HepG2 (cell line): ENCODE measurements at regions of chr20 and their contacts with region 1.

Region 1: DNA sequence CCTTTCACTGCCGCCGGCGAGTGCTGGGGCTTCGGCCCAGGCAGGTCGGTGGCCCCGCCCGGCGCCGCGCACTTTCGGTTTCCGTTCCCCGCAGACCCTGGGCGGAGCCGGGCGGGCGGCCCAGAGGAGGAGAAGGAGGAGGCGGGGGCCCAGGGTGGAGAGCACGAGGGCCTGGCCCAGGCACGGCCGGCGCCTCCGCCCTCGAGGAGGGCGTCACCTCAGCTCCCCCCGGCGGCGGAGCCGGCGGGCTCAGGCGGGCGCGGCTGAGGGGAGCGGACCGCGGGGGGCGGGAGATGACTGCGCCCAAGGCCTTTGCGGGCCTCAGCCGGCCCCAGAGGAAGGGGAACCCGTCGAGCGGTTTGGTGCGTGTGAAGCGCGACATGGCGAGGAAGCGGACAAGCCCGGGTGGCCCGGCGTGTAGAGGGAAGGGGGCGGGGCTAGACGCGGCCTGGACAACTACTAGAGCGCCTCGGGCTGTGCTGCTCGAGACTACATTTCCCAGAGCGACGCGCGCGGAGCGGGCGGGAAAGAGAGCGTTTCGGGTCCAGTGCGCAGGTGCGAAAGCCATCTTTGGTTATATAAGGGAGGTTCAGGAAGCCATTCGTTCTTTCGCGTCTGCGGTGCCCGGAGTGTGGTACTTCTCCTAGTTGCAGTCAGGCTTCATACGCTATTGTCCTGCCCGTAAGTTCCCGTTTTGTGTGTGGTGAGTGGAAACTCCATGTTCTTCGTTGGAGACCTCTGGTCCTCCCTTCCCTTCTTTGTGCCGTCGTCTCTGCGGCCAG is at the start of gene ZNFX1:
- DNase-seq: peak; percentile 99
- ATAC-seq: peak; percentile 89
- H3K4me3 ChIP-seq: peak within 1 kb of the TSS; percentile 91 to 98 (median 93)
- H3K27ac ChIP-seq: peak within 1 kb of the TSS; percentile 91
- H3K4me1 ChIP-seq: peaks cover 60% of the 10 kb centered on the region
- H3K27me3 ChIP-seq: peaks cover 0 to 4% of the 10 kb centered on the region in 2 experiments; a peak in 1 of 5 replicates
- CTCF ChIP-seq: peak; percentile 46; the same call in 1 of the 2 replicates
- EP300 ChIP-seq: peak; percentile 33 to 38; a peak in 2 of 4 replicates
- POLR2A ChIP-seq: peak; percentile 100
- RAD21 ChIP-seq: peak; percentile 75
- total RNA-seq, gene ZNFX1: 11.1 and 15.9 TPM in 2 replicates

Region 2: GRCh38 chr20:48818407-48818987 is 459.7 kb before region 1 on chr20:
- CTCF ChIA-PET with region 1: no interaction called
- POLR2A ChIA-PET with region 1: no interaction called
- in situ Hi-C with region 1: no loop called
- intact Hi-C with region 1: loop called (anchors 5 kb)
- DNase-seq: no peak
- ATAC-seq: no peak
- H3K4me3 ChIP-seq: no peak overlapping the region
- H3K27ac ChIP-seq: no peak overlapping the region
- H3K4me1 ChIP-seq: no peaks in the 10 kb centered on the region
- H3K27me3 ChIP-seq: peaks cover 3 to 92% of the 10 kb centered on the region in 2 experiments; a peak in 4 of 5 replicates
- CTCF ChIP-seq: no peak
- EP300 ChIP-seq: no peak
- POLR2A ChIP-seq: no peak
- RAD21 ChIP-seq: no peak

Region 3: DNA sequence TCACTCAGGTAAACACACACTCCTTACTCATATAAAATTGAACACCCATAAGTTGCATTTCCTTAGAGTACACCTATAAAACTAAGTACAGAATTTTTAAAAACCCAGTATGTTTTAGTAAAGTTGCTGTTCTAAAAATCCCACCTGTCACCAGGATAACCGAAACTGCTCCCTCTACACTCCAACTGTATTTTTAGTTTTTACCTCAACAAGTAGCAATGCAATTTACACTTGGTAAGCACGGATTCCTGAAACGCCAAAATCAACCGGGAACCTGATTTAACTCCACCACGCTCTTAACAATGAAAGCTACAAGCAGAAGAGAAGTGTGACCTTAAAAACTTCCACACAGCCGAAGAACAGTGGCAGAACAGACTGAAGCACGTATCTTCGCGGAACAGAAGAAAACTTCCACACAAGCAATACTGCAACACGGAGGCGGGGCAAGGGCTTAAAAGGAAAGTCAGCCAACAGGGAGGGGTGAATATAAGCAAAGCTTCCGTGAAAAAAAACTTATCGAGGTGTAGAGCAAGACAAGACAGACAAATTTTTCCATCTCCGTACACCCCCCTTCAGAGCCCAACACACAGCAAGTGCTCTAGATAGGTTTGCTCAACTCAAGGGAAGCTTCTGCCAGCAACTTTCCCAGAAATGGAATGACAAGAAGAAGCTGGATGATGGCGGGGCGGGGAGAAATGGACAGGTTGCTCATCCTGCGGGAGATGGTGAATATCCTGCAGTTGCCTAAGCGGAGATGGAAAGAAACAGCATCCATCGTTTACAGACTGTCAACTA is 91.5 kb before region 1 on chr20:
- CTCF ChIA-PET with region 1: no interaction called
- POLR2A ChIA-PET with region 1: interaction called, 4 read pairs
- in situ Hi-C with region 1: no loop called
- intact Hi-C with region 1: loop called (anchors 5 kb)
- DNase-seq: peak; percentile 62
- ATAC-seq: peak; percentile 2; the same call in 1 of the 3 replicates
- H3K4me3 ChIP-seq: peak overlapping the region; percentile 88 to 99 (median 97)
- H3K27ac ChIP-seq: peak overlapping the region; percentile 77
- H3K4me1 ChIP-seq: peaks cover 42% of the 10 kb centered on the region
- H3K27me3 ChIP-seq: peaks cover 0 to 5% of the 10 kb centered on the region in 2 experiments; a peak in 1 of 5 replicates
- CTCF ChIP-seq: peak; percentile 9; the same call in 1 of the 2 replicates
- EP300 ChIP-seq: peak in 1 of 2 experiments; percentile 18; a peak in 1 of 4 replicates
- POLR2A ChIP-seq: peak; percentile 51 to 60; a peak in 3 of 4 replicates
- RAD21 ChIP-seq: no peak

Region 4: GRCh38 chr20:49207076-49207475 is 71.2 kb before region 1 on chr20:
- CTCF ChIA-PET with region 1: no interaction called
- POLR2A ChIA-PET with region 1: no interaction called
- in situ Hi-C with region 1: no loop called
- intact Hi-C with region 1: no loop called
- DNase-seq: peak; percentile 76
- ATAC-seq: peak; percentile 98
- H3K4me3 ChIP-seq: no peak overlapping the region; a peak in 1 of 6 replicates
- H3K27ac ChIP-seq: no peak overlapping the region
- H3K4me1 ChIP-seq: 0 out of 2 replicates have a peak, but pooled peaks cover 12% of the 10 kb centered on the region
- H3K27me3 ChIP-seq: no peaks in the 10 kb centered on the region
- CTCF ChIP-seq: peak; percentile 94
- EP300 ChIP-seq: no peak
- POLR2A ChIP-seq: no peak
- RAD21 ChIP-seq: peak; percentile 65; the same call in 1 of the 2 replicates

Region 5: DNA sequence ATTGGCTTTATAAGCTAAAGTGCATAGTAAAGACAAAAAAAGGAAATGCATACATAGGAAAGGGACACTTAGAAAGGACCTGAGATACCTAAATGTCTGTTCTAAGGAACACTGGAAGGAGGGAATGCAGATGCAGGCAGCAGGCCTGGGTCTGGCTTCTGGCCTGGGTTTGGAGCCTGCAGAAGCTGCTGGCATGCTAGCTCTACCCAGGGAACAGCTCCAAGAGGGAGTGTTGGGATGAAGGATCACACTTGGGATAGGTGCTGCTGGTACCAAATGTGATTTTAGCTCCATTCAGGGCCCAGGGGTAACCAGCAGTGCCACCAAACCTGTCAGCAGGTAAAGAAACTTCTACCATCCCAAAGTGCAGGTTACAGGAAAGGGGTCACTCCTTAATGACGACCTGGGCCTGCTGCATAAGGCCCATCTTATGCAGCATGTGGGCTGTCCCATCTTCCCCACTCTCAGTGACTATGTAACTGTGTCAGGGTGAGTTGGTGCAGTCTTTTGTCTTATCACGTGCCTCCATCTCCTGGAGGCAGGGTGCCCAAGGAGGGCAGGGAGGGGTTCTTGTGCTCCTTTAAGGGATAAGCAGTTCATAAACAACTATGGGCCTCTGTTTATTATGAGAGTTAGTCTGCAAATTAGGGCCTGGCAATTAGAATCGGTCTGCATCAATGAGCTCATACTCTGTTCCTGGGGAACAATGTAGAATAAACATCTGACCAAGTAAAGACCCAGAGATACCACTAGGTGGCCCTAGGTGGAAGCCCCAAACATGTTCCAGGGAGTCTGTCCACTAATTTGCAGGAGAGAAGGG is 32.1 kb before region 1 on chr20:
- CTCF ChIA-PET with region 1: no interaction called
- POLR2A ChIA-PET with region 1: interaction called, 5 read pairs
- in situ Hi-C with region 1: no loop called
- intact Hi-C with region 1: loop called (anchors 1 kb)
- DNase-seq: peak; percentile 68
- ATAC-seq: peak; percentile 87
- H3K4me3 ChIP-seq: no peak overlapping the region
- H3K27ac ChIP-seq: no peak overlapping the region
- H3K4me1 ChIP-seq: no peaks in the 10 kb centered on the region
- H3K27me3 ChIP-seq: no peaks in the 10 kb centered on the region
- CTCF ChIP-seq: peak; percentile 79
- EP300 ChIP-seq: no peak
- POLR2A ChIP-seq: peak in 1 of 2 experiments; percentile 21; a peak in 1 of 4 replicates
- RAD21 ChIP-seq: 0 out of 2 replicates have a peak, but pooled peaks have one; percentile 51

Region 6: DNA sequence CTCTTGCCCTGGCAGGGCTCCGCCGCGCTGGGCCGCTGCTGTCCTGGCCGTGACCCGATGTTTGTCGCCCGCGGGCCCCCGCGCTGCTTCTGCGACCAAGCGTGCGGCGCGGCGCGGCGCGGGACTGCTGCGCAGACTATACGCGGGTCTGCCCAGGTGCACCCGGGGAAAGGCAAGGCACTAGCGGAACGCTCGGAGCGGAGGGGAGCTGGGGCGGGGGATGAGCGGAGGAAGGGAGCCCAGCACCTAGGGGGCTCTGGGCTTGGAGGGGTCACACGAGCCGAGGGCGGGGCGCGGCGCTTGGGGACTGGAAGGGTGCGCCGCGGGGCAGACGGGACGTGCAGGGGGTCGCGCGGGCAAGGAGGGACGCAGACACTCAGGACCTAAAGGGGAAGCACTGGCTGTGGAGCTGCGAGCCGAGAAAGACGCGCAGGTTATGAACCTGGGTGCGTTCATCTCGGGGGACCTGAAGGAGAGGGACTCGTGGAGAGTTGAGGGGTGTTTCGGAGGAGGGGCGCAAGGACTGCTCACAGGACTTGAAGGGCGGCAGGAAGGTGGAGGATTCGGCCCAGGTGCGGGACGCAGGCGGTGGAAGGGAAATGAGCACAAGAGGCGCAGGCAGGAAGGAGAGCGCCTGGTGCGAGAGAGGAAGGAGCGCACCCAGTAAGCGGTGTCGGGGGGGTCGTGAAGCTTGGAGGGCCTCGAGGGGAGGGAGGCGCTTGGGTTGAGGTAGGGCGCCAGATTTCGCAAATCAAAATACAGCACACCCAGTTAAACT is 40.4 kb after region 1 on chr20:
- CTCF ChIA-PET with region 1: no interaction called
- POLR2A ChIA-PET with region 1: interaction called, 4 read pairs
- in situ Hi-C with region 1: no loop called
- intact Hi-C with region 1: loop called (anchors 2 kb)
- DNase-seq: no peak
- ATAC-seq: peak; percentile 36; the same call in 2 of the 3 replicates
- H3K4me3 ChIP-seq: peak overlapping the region in 1 of 3 experiments; percentile 47; a peak in 1 of 6 replicates
- H3K27ac ChIP-seq: no peak overlapping the region
- H3K4me1 ChIP-seq: peaks cover 9% of the 10 kb centered on the region; the same call in 1 of the 2 replicates
- H3K27me3 ChIP-seq: peaks cover 7 to 55% of the 10 kb centered on the region in 2 experiments; a peak in 4 of 5 replicates
- CTCF ChIP-seq: no peak
- EP300 ChIP-seq: no peak
- POLR2A ChIP-seq: no peak
- RAD21 ChIP-seq: no peak

Region 7: GRCh38 chr20:49361862-49362660 is 83.8 kb after region 1 on chr20:
- CTCF ChIA-PET with region 1: no interaction called
- POLR2A ChIA-PET with region 1: no interaction called
- in situ Hi-C with region 1: no loop called
- intact Hi-C with region 1: no loop called
- DNase-seq: no peak
- ATAC-seq: no peak
- H3K4me3 ChIP-seq: no peak overlapping the region
- H3K27ac ChIP-seq: no peak overlapping the region
- H3K4me1 ChIP-seq: peaks cover 18% of the 10 kb centered on the region
- H3K27me3 ChIP-seq: peaks cover 1 to 35% of the 10 kb centered on the region in 2 experiments; a peak in 2 of 5 replicates
- CTCF ChIP-seq: no peak
- EP300 ChIP-seq: no peak
- POLR2A ChIP-seq: no peak
- RAD21 ChIP-seq: no peak

Region 8: GRCh38 chr20:49747707-49748524 is 469.7 kb after region 1 on chr20:
- CTCF ChIA-PET with region 1: no interaction called
- POLR2A ChIA-PET with region 1: no interaction called
- in situ Hi-C with region 1: no loop called
- intact Hi-C with region 1: no loop called
- DNase-seq: peak; percentile 57
- ATAC-seq: peak; percentile 66
- H3K4me3 ChIP-seq: peak overlapping the region in 2 of 3 experiments; percentile 4 to 51; a peak in 1 of 6 replicates
- H3K27ac ChIP-seq: no peak overlapping the region
- H3K4me1 ChIP-seq: peaks cover 43% of the 10 kb centered on the region
- H3K27me3 ChIP-seq: peaks cover 0 to 15% of the 10 kb centered on the region in 2 experiments; a peak in 2 of 5 replicates
- CTCF ChIP-seq: no peak
- EP300 ChIP-seq: no peak
- POLR2A ChIP-seq: no peak
- RAD21 ChIP-seq: no peak

Region 9: DNA sequence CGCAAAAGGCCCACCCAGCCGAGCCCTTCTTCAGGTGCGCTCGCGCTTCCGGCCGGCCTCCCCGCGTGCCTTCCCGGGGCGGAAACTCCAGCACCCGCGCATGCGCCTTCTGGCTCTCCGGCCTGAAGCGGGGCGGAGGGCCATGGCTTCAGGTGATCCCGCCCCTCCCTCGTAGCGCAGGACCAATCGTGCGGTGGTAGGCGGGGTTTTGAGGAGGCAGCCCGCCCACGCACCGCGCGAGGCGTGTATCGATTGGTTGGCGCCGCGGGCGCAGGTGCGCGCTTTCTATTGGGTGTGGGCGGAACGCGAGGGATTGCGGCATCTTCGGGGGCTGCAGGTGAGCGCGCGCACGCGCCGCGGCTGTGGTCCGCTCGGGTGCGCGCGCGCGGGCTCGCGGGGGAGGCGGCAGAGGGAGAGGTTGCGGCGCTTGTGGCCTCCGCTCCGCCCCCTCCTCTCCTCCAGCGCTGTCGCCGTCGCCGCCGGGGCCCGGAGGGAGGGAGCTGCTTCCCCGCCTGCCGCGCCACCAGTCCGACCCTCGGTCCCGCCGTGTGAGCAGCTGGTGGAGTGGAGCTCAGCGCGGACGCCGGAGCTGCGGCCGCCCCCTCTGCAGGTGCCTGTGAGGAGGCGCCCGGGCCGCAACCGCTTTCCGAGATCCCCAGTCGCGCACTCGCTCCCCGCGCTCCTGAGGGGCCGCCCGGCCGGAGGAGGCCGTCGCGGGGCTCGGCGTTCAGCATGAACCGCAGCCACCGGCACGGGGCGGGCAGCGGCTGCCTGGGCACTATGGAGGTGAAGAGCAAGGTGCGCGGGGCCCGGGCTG is 1453.0 kb after region 1 on chr20 and contains the start of gene PARD6B:
- CTCF ChIA-PET with region 1: no interaction called
- POLR2A ChIA-PET with region 1: no interaction called
- in situ Hi-C with region 1: no loop called
- intact Hi-C with region 1: no loop called
- DNase-seq: peak; percentile 99
- ATAC-seq: peak; percentile 80
- H3K4me3 ChIP-seq: peak within 1 kb of the TSS; percentile 88 to 96 (median 95)
- H3K27ac ChIP-seq: peak within 1 kb of the TSS; percentile 89
- H3K4me1 ChIP-seq: peaks cover 81% of the 10 kb centered on the region
- H3K27me3 ChIP-seq: no peaks in the 10 kb centered on the region; a peak in 1 of 5 replicates
- CTCF ChIP-seq: peak; percentile 46
- EP300 ChIP-seq: peak in 1 of 2 experiments; percentile 20; a peak in 1 of 4 replicates
- POLR2A ChIP-seq: peak; percentile 93 to 97
- RAD21 ChIP-seq: peak; percentile 85
- total RNA-seq, gene PARD6B: 22.2 and 26.6 TPM in 2 replicates